ENCODE measurements at regions of chr2 and their contacts with region 1.

Region 1: DNA sequence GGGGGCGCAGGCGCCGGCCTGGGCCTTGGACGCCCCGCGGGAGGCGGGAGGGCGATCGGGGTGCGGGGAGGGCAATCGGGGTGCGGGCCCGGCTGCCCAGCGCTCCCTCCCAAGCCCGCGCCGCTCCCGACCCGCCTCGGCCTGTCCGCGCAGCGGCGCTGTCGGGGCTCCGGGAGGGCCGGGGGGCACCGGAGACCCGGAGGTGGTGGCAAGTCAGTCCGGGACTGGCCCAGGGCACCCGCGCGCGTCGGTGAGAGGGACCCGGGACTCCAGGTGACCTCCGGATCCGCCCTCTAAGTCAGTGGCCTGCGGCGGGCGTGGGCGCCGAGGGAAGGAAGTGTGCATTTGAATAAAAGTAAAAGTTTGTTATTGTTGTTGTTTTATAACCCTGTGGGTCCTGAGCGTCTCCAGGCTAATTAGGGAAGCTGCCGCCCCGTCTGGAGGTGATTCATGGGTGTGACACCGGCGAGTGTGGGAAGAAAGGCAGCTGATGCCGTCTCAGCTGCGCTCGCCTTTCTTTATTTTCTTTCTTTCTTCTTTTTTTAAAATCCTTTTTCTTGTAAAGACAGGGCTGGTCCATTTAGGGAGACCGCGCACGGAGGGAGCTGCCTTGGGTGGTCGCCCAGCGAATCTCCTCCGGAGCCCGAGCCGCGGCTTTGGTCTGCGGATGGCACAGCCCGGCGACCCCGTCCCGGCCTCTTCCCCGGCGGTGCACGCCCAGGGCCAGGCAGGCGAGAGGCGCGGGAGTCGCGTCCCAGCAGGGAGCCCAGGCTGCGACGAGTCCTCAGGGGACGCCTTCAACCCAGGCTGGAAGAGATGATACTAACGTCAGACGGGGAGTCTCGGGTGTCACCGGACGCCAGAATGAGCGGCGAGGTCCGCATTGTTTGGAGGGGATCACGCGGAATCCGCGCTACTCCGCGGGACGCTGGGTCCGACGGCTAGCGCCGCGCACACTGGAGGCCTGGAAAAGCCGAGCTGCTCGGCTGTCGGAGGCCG is 627 bp upstream of the CRACDL start:
- DNase-seq: peak; percentile 53
- H3K4me3 ChIP-seq: peak overlapping the region; percentile 66 to 78 (median 71)
- H3K27ac ChIP-seq: peak overlapping the region; percentile 59
- H3K4me1 ChIP-seq: peaks cover 18% of the 10 kb centered on the region
- H3K27me3 ChIP-seq: no peaks in the 10 kb centered on the region
- CTCF ChIP-seq: peak; percentile 10 to 42

Region 2: GRCh38 chr2:98822301-98823164 is 114.1 kb before region 1 on chr2:
- CTCF ChIA-PET with region 1: no interaction called
- dilution Hi-C with region 1: no loop called
- in situ Hi-C with region 1: no loop called
- intact Hi-C with region 1: no loop called
- DNase-seq: no peak
- H3K4me3 ChIP-seq: peak overlapping the region in 2 of 3 experiments; percentile 11 to 35
- H3K27ac ChIP-seq: no peak overlapping the region
- H3K4me1 ChIP-seq: peaks cover 20% of the 10 kb centered on the region
- H3K27me3 ChIP-seq: no peaks in the 10 kb centered on the region
- CTCF ChIP-seq: peak in 1 of 2 donors; percentile 44

Region 3: DNA sequence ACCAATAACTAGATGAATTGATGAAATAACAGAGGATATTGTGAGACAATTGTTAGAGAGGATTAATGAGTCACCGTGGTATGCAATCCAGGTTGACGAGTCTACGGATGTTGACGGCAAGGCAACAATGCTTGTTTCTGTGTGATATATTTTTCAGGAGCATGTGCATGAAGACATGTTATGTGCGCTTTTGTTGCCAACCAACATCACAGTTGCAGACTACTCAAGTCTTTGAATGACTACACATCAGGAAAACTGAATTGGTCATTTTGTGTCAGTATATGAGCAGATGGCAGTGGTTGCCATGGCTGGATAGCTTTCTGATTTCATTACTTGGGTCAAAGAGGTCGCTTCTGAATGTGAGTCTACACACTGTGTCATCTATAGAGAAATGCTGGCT is 96.1 kb after region 1 on chr2:
- CTCF ChIA-PET with region 1: no interaction called
- dilution Hi-C with region 1: no loop called
- in situ Hi-C with region 1: no loop called
- intact Hi-C with region 1: loop called (anchors 5 kb)
- DNase-seq: peak; percentile 84
- H3K4me3 ChIP-seq: no peak overlapping the region
- H3K27ac ChIP-seq: peak overlapping the region; percentile 74
- H3K4me1 ChIP-seq: peaks cover 13% of the 10 kb centered on the region
- H3K27me3 ChIP-seq: no peaks in the 10 kb centered on the region
- CTCF ChIP-seq: no peak